Naive thymus-derived CD8-positive, alpha-beta T cell (primary cell): ENCODE measurements at regions of chr12 and their contacts with region 1.

Region 1: DNA sequence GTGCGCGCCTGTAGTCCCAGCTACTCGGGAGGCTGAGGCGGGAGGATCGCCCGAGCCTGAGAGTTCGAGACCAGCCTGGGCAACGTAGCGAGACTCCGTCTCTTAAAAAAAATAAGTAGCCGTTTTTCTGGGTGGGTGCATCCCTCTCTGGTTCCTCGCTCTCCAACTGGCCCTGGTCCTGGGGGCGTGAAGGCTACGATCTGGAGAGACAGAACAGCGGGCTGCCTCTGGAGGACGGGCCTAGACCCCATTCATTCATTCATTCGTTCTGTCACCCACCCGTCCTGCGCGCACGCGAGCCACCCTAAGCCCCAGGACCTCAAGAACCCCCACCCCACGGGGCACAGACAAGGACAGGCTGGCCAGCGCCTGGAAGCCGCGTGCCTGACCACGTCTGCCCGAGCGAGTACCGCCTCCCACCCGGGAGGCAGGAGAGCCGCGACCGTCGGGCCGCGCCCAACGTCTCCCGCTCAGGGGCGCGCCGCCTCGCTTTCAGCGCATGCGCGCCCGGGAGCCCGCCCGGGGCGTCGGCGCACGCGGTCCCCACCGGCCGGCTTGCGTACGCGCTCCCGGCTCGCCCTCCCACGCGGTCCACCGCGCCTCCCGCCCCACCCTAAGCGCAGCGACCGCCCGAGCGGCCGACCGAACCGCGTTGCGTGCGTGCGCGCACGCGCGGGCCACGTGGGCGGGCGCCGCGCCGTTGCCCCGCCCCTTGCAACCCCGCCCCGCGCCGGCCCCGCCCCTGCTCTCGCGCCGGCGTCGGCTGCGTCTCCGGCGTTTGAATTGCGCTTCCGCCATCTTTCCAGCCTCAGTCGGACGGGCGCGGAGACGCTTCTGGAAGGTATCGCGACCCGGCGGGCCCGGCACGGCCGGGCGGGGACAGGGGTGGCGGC is at the start of gene RAN:
- DNase-seq: peak; percentile 82 to 95 (median 91)
- ATAC-seq: peak; percentile 75 to 76
- H3K4me3 Mint-ChIP-seq: peak within 1 kb of the TSS; percentile 81 to 94 (median 93)
- H3K27ac Mint-ChIP-seq: peak within 1 kb of the TSS; percentile 90 to 98 (median 95)
- H3K4me1 Mint-ChIP-seq: peaks cover 28 to 75% (median 67%) of the 10 kb centered on the region in 4 donors
- H3K27me3 Mint-ChIP-seq: no peaks in the 10 kb centered on the region
- polyA plus RNA-seq, gene RAN: 522 to 578 (median 572) TPM

Region 2: GRCh38 chr12:130838951-130839769 is 32.4 kb before region 1 on chr12 and contains the start of gene STX2:
- POLR2A ChIA-PET with region 1: interaction called, 16 read pairs
- DNase-seq: peak; percentile 81 to 96 (median 91)
- ATAC-seq: peak; percentile 82 to 87
- H3K4me3 Mint-ChIP-seq: peak within 1 kb of the TSS; percentile 76 to 93 (median 87)
- H3K27ac Mint-ChIP-seq: peak within 1 kb of the TSS; percentile 17 to 97 (median 94)
- H3K4me1 Mint-ChIP-seq: peaks cover 9 to 43% (median 25%) of the 10 kb centered on the region in 4 donors
- H3K27me3 Mint-ChIP-seq: no peaks in the 10 kb centered on the region
- polyA plus RNA-seq, gene STX2: 6.7 to 9.3 (median 9.2) TPM